GM10248 (cell line): ENCODE measurements at regions of chrX and their contacts with region 1.

Region 1: GRCh38 chrX:24371391-24371972 is 11.0 kb downstream of the SUPT20HL1 start:
- DNase-seq: peak; percentile 71
- CTCF ChIP-seq: peak; percentile 60

Region 2: DNA sequence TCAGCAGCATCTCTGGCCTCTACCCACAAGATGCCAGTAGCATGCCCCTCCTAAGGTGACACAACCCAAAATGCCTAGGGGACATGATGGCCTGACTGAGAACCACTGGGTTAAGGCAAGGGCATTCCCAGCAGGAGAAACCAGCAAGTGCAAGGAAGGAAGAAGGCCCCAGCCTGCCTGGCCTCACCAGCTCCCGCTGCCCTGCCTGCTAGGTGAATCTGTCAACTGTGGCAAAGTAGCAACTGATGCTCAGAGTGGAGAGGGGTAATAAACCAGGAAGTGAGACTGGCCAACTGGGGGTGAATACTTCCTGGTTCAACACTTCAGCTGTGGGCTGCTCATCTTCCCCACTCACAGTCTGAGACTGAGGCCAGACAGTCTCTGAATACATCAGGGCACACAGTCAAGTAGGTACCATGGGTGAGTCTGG is 554.3 kb before region 1 on chrX:
- CTCF ChIA-PET with region 1: no interaction called
- POLR2A ChIA-PET with region 1: no interaction called
- DNase-seq: peak; percentile 56
- CTCF ChIP-seq: no peak

Region 3: DNA sequence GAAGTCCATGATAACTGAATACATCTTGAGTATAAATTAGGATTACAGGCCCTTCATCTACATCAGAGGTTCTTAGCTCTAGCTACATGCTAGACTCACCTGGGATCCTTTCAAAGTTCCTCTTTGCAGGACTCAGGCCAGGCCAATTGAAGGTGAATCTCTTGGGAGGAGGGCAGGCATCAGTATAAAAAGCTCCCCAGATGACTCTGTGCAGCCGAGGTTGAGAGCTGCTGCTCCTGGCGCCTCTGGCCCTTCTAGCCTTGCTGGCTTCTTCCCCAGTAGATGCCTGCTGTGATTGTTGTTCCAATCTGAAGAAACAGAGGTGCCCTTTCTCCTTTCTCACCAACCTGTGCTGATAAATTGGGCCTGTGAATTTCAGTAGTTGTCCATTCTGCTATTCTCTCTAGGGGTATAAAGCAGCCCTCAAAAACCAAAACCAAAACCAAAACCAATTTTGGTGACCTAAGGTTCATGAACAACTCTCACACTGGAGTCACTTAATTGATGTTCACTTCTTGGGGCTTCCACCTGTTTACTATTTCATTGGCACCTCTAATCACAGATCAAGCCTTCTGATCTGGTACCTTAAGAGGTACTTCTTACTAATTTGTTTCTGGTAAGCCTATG is 136.3 kb before region 1 on chrX:
- CTCF ChIA-PET with region 1: no interaction called
- POLR2A ChIA-PET with region 1: no interaction called
- DNase-seq: peak; percentile 13
- CTCF ChIP-seq: no peak

Region 4: DNA sequence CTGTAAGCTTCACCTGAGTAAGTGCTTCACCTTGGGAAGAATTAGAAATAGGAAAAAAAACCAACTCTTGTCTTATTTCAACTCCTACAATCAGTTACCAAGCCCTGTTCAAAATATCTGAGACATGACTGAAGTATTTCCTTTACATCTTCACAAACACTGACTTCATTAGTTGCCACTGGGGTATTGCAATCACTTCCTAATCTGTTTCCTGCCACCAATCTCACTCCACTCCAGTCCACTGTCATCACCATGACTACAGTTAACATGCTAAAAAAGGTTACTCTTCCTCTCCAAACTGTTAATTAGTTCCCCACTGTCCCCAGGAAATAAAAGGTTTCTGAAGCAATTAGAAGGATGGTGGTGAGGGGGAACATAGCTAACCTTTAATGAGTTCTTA is 14.4 kb before region 1 on chrX:
- CTCF ChIA-PET with region 1: interaction called, 12 read pairs
- POLR2A ChIA-PET with region 1: no interaction called
- DNase-seq: no peak
- CTCF ChIP-seq: no peak

Region 5: GRCh38 chrX:24395775-24396174 is 24.3 kb after region 1 on chrX:
- CTCF ChIA-PET with region 1: interaction called, 16 read pairs
- POLR2A ChIA-PET with region 1: no interaction called
- DNase-seq: peak; percentile 54
- CTCF ChIP-seq: peak; percentile 46

Region 6: GRCh38 chrX:24448762-24449250 is 77.3 kb after region 1 on chrX:
- CTCF ChIA-PET with region 1: no interaction called
- POLR2A ChIA-PET with region 1: no interaction called
- DNase-seq: no peak
- CTCF ChIP-seq: no peak

Region 7: DNA sequence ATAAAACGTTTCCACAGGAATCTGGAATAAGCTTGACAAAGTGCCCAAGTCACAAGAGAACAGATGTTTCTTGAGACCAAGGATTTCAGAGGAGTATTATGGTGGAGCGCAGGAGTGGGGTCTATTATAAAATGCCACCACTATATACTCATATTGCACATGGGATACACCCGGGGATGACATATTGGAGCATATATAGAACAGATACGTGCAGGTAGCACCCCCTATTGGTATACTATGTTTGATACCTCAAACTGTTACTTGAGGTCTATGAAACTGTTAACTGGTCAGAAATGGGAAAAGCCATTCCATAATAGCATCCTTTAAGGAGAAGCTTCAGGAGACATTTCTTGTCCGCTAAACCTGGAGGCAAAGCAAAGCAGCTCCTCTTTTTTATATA is 189.6 kb after region 1 on chrX:
- CTCF ChIA-PET with region 1: interaction called, 23 read pairs
- POLR2A ChIA-PET with region 1: no interaction called
- DNase-seq: peak; percentile 50
- CTCF ChIP-seq: no peak